OCI-LY7 (cell line): ENCODE measurements at regions of chrX and their contacts with region 1.

Region 1: DNA sequence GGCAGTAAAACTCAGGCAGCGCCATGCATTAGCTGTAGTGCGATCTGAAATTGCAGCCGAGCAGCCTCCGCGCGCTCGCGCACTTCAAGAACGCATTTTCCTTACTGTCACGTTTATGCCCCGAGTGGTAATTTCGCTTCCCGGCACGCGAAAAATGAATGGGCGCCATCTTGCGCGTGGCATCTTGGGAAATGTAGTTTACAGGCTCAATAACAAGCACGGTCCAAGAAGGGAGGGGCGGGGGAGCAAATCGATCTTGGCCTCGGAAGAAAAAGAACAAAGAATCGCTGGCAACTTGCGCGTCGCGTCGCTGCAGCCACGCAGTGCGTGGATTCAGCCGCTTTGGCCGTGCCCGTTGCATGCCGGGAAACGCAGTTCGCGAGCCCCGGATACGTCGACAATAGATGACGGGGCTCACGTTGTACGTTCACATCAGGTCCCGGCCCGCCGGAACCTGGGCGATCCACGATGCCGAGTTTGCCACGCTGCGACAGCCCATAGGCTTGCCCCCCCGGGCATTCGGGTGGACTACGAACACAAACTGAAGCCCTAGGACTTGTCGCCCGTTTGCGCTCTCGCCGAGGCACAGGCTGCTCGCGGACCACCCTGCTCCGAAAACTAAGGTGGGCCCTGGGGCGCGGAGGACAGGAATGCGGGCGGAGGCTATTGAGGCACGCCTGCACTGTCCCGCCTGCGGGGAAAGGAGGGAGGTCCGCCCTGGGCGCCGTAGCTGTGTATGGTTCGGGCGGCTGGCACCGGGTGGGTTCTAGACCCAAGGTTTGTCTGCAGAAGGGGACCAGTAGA is at the start of gene FTSJ1:
- DNase-seq: peak; percentile 85
- H3K4me3 ChIP-seq: peak within 1 kb of the TSS; percentile 91
- H3K27ac ChIP-seq: peak within 1 kb of the TSS; percentile 66
- H3K4me1 ChIP-seq: peaks cover 19% of the 10 kb centered on the region
- CTCF ChIP-seq: no peak
- total RNA-seq, gene FTSJ1: 55.7 and 66.1 TPM in 2 replicates

Region 2: GRCh38 chrX:47179221-47179920 is 1296.6 kb before region 1 on chrX:
- CTCF ChIA-PET with region 1: no interaction called
- POLR2A ChIA-PET with region 1: no interaction called
- intact Hi-C with region 1: no loop called
- DNase-seq: no peak
- H3K4me3 ChIP-seq: no peak overlapping the region
- H3K27ac ChIP-seq: no peak overlapping the region
- H3K4me1 ChIP-seq: no peaks in the 10 kb centered on the region
- CTCF ChIP-seq: no peak

Region 3: GRCh38 chrX:48521353-48522243 is 45.6 kb after region 1 on chrX and contains the start of gene EBP:
- CTCF ChIA-PET with region 1: no interaction called
- POLR2A ChIA-PET with region 1: no interaction called
- intact Hi-C with region 1: loop called (anchors 5 kb)
- DNase-seq: peak; percentile 94
- H3K4me3 ChIP-seq: peak within 1 kb of the TSS; percentile 95
- H3K27ac ChIP-seq: peak within 1 kb of the TSS; percentile 95
- H3K4me1 ChIP-seq: peaks cover 50% of the 10 kb centered on the region
- CTCF ChIP-seq: no peak
- total RNA-seq, gene EBP: 94.4 and 101 TPM in 2 replicates

Region 4: DNA sequence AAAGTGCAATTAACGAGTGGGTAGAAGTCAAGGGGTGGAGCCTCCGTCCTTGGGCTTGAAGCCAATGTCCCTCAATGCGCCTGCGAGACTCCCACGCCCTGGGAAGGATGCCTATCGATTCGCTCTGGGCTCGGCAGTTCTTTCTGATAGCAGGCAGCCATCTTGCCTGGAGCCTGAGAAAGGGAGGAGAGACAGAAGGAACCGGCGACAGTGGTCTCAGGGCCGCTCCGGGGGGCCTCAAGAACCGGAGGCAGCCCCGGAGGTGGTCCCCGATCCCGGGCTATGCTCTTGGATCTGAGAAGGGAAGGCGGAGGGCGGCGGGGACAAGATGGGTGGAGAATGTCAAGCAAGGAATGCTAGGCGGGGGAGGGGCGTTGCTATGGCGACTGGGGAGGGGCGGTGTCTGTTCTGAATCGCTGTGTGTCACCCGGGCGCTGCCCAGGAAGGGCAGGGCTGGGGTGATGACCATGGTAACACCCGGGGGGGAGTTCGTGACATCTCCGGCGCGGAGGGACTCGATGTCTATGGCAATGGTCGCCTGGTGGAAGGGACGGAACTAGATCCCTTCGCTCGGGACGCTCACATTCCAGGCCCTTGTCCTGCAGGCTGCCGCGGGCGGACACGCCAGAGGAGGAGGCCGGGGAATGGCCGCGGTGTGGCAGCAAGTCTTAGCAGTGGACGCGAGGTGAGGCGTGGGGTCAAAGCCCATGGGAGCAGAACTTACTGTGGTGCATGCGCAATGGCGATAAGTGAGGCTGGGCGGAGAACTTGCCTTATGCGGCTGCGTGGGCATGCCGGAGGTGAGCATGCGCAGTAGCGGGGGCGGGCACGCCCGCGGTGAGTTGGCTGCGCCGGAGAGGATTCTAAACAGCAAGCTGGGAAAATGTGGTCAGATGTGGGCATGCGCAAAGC is 121.6 kb after region 1 on chrX and contains the start of gene WDR13:
- CTCF ChIA-PET with region 1: no interaction called
- POLR2A ChIA-PET with region 1: no interaction called
- intact Hi-C with region 1: loop called (anchors 2 kb)
- DNase-seq: peak; percentile 89
- H3K4me3 ChIP-seq: peak within 1 kb of the TSS; percentile 79
- H3K27ac ChIP-seq: peak within 1 kb of the TSS; percentile 71
- H3K4me1 ChIP-seq: peaks cover 22% of the 10 kb centered on the region
- CTCF ChIP-seq: no peak
- total RNA-seq, gene WDR13: 46.7 and 55.6 TPM in 2 replicates